Ovary (tissue), 10 donors: ENCODE measurements at regions of chr13 and their contacts with region 1.

Region 1: GRCh38 chr13:101465877-101466276 is 13.4 kb downstream of the ITGBL1 start:
- DNase-seq: no peak
- H3K4me3 ChIP-seq: no peak overlapping the region
- H3K27ac ChIP-seq: no peak overlapping the region
- H3K4me1 ChIP-seq: no peaks in the 10 kb centered on the region
- H3K27me3 ChIP-seq: no peaks in the 10 kb centered on the region
- CTCF ChIP-seq: no peak
- EP300 ChIP-seq: no peak
- POLR2A ChIP-seq: no peak

Region 2: DNA sequence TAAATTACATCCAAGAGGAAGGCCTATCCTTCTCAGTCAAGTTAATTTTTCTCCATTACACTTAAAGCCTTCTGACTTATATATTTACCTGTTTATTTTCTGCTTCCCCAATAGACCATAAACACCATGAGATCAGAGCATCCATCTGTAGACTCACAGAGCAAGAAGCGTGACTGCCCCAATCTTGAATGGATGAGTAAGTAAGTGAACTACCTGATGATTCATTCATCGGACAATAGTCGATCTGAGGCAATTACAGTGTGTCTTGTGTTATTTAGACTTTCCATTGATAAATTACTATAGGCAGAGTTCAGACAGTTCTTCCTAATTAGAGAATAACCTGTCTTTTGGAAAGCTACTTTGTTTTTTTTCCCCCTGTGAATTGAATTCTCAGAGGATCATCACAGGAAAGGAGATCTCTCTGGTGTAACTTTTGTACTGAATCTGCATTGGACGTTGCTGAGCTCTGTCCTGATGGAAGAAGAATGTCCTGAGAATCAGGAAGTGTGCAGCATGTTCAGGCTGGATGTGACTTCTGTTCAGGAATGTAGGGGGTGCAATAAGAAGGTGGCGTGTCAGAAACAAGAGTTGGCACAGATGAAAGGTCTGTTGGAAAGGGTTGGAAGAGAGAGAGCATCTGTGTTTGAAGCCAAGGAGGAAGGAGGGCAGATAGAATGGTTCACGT is 416.6 kb before region 1 on chr13:
- intact Hi-C with region 1: no loop called
- DNase-seq: no peak
- H3K4me3 ChIP-seq: no peak overlapping the region
- H3K27ac ChIP-seq: no peak overlapping the region
- H3K4me1 ChIP-seq: no peaks in the 10 kb centered on the region
- H3K27me3 ChIP-seq: no peaks in the 10 kb centered on the region
- CTCF ChIP-seq: no peak
- EP300 ChIP-seq: no peak
- POLR2A ChIP-seq: no peak

Region 3: DNA sequence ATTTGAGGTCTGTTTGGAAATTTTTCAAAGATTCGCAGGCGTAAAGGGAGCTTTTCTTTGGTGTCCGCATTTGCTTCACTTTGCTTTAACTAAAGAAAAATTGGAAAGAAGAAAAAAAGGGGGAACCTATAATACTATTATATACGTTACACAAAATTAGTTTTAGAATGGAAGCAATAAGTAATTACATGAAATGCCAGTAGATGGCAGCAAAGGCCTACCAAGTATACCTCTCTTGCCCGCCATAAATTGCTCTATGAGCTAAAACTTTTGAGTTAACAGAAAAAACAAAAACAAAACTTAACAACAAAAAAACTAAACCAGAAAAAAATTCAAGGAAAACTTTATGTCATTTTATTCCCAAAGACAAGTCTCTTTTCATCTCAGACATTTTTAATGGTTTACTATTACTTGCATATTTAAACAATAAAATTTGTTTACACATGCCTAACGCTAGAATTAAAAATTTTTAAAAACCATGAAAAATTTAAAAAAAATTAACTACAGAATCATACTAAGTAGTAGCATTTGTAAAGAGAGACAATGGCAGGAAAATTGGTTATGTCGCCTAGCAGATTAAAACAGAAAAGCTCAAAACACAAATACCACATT is 321.0 kb before region 1 on chr13:
- intact Hi-C with region 1: loop called in 2 of 4 experiments (anchors 10 kb)
- DNase-seq: no peak
- H3K4me3 ChIP-seq: no peak overlapping the region
- H3K27ac ChIP-seq: no peak overlapping the region
- H3K4me1 ChIP-seq: no peaks in the 10 kb centered on the region
- H3K27me3 ChIP-seq: no peaks in the 10 kb centered on the region
- CTCF ChIP-seq: peak in 2 of 3 donors; percentile 23 to 65
- EP300 ChIP-seq: no peak
- POLR2A ChIP-seq: no peak

Region 4: GRCh38 chr13:101354895-101355294 is 111.0 kb before region 1 on chr13:
- intact Hi-C with region 1: no loop called
- DNase-seq: no peak
- H3K4me3 ChIP-seq: no peak overlapping the region
- H3K27ac ChIP-seq: no peak overlapping the region
- H3K4me1 ChIP-seq: no peaks in the 10 kb centered on the region
- H3K27me3 ChIP-seq: no peaks in the 10 kb centered on the region
- CTCF ChIP-seq: no peak
- EP300 ChIP-seq: no peak
- POLR2A ChIP-seq: no peak